ENCODE measurements at regions of chr6 and their contacts with region 1.

Region 1: DNA sequence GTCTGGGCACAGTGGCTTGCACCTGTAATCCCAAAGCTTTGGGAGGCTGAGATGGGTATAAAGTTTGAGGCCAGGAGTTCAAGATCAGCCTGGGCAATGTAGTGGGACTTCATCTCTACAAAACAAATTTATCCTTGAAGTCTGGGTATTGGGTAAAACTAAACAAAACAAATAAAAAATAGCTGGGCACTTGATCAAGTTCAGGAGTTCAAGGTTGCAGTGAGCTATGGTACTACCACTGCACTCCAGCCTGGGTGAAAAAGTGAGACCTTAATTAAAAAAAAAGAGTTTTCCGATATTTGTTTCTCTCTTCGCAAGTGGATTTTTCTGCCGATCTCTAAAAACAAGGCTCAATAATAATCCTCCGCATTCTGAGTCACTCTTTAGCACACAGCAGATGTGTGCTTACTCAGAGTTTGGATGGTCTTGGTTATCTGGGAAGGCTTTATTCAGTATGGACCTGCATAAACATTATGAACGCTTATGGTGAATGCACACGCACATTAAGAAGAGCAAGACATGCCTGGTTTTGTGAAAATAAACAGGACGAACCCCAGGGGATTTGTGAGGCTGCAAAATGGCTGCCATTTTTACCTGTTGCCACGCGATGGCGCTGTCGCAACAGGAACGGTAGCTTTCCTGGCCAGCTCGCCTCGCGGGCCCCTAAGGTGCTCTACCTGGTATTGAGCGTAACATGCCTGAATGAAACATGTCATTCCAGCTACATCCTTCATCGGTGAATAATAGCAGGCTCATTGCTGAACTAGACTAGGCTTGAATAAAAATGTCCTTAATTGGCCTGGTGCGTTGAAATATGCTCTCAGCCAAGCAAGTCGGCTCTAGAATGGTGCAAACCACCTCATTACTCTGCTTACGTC is 6.0 kb downstream of the OPN5 start:
- DNase-seq: peak; percentile 59
- ATAC-seq: peak; percentile 97
- H3K4me3 ChIP-seq: no peak overlapping the region
- H3K27ac ChIP-seq: no peak overlapping the region
- H3K4me1 ChIP-seq: peaks cover 12% of the 10 kb centered on the region
- H3K27me3 ChIP-seq: peaks cover 0 to 4% of the 10 kb centered on the region in 2 experiments; a peak in 2 of 5 replicates
- CTCF ChIP-seq: peak; percentile 99
- EP300 ChIP-seq: no peak
- POLR2A ChIP-seq: no peak
- RAD21 ChIP-seq: peak; percentile 96

Region 2: DNA sequence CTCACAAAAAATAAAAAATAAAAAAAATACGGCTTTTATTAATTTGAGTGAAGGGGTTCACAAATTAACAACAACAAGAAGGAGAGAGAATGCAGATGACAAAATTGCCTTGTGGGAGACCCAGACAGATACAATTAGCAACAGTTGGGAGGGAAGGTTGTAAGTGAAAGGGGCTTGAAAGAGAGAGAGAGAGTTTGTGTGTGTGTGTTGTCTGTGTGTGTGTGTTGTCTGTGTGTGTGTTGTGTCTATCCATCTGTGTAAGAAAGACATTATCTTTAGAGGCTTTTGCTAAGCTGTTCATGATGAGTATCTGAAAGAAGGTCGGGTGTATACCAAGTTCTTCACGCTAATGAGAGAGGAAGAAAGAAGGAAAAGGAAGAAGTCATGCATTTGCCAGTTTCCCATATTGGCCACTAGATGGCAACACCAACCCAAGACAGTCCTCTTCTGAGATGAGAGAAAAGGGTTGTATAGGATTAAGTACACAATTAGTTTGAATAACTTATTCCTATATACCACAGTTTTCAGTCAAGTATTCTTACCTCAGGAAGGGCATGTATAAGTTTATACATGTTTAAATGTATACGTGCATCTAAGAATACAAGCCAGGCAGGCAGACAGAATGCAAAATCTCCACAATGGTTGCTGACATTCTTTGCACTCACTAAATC is 374.0 kb before region 1 on chr6:
- CTCF ChIA-PET with region 1: no interaction called
- POLR2A ChIA-PET with region 1: no interaction called
- in situ Hi-C with region 1: loop called (anchors 10 kb)
- intact Hi-C with region 1: no loop called
- DNase-seq: peak; percentile 64
- ATAC-seq: peak; percentile 90
- H3K4me3 ChIP-seq: peak overlapping the region; percentile 52 to 62 (median 57); a peak in 5 of 6 replicates
- H3K27ac ChIP-seq: no peak overlapping the region
- H3K4me1 ChIP-seq: peaks cover 20% of the 10 kb centered on the region
- H3K27me3 ChIP-seq: no peaks in the 10 kb centered on the region
- CTCF ChIP-seq: peak; percentile 93
- EP300 ChIP-seq: no peak
- POLR2A ChIP-seq: no peak
- RAD21 ChIP-seq: peak; percentile 86

Region 3: GRCh38 chr6:48476257-48476656 is 688.4 kb after region 1 on chr6:
- CTCF ChIA-PET with region 1: interaction called, 6 read pairs
- POLR2A ChIA-PET with region 1: no interaction called
- in situ Hi-C with region 1: loop called (anchors 5 kb)
- intact Hi-C with region 1: loop called (anchors 1 kb)
- DNase-seq: peak; percentile 32
- ATAC-seq: peak; percentile 82
- H3K4me3 ChIP-seq: no peak overlapping the region
- H3K27ac ChIP-seq: no peak overlapping the region
- H3K4me1 ChIP-seq: no peaks in the 10 kb centered on the region
- H3K27me3 ChIP-seq: no peaks in the 10 kb centered on the region
- CTCF ChIP-seq: peak; percentile 64
- EP300 ChIP-seq: no peak
- POLR2A ChIP-seq: no peak
- RAD21 ChIP-seq: no peak

Region 4: GRCh38 chr6:48765352-48765961 is 977.6 kb after region 1 on chr6:
- CTCF ChIA-PET with region 1: interaction called, 36 read pairs
- POLR2A ChIA-PET with region 1: no interaction called
- in situ Hi-C with region 1: loop called (anchors 5 kb)
- intact Hi-C with region 1: loop called (anchors 1 kb)
- DNase-seq: peak; percentile 46
- ATAC-seq: peak; percentile 93
- H3K4me3 ChIP-seq: no peak overlapping the region
- H3K27ac ChIP-seq: no peak overlapping the region
- H3K4me1 ChIP-seq: no peaks in the 10 kb centered on the region
- H3K27me3 ChIP-seq: no peaks in the 10 kb centered on the region
- CTCF ChIP-seq: peak; percentile 73
- EP300 ChIP-seq: no peak
- POLR2A ChIP-seq: no peak
- RAD21 ChIP-seq: peak; percentile 62

Region 5: GRCh38 chr6:49423817-49424216 is 1636.0 kb after region 1 on chr6:
- CTCF ChIA-PET with region 1: no interaction called
- POLR2A ChIA-PET with region 1: no interaction called
- in situ Hi-C with region 1: loop called (anchors 5 kb)
- intact Hi-C with region 1: no loop called
- DNase-seq: no peak
- ATAC-seq: no peak; the same call in 2 of the 3 replicates
- H3K4me3 ChIP-seq: no peak overlapping the region
- H3K27ac ChIP-seq: no peak overlapping the region
- H3K4me1 ChIP-seq: no peaks in the 10 kb centered on the region
- H3K27me3 ChIP-seq: no peaks in the 10 kb centered on the region
- CTCF ChIP-seq: no peak
- EP300 ChIP-seq: no peak
- POLR2A ChIP-seq: no peak
- RAD21 ChIP-seq: no peak

Measured in HepG2 (cell line).